Panc1 (cell line): ENCODE measurements at regions of chr7 and their contacts with region 1.

Region 1: GRCh38 chr7:322111-322671 is 32.2 kb downstream of the FOXL3 start:
- DNase-seq: no peak
- ATAC-seq: peak; percentile 95
- H3K4me3 ChIP-seq: peak overlapping the region in 1 of 2 experiments; percentile 33; a peak in 2 of 4 replicates
- H3K27ac ChIP-seq: no peak overlapping the region
- H3K4me1 ChIP-seq: peaks cover 7% of the 10 kb centered on the region
- H3K27me3 ChIP-seq: peaks cover 14% of the 10 kb centered on the region
- CTCF ChIP-seq: peak; percentile 98

Region 2: GRCh38 chr7:519484-520390 is 197.5 kb after region 1 on chr7 and contains the start of gene PDGFA:
- CTCF ChIA-PET with region 1: no interaction called
- POLR2A ChIA-PET with region 1: no interaction called
- in situ Hi-C with region 1: no loop called
- intact Hi-C with region 1: loop called (anchors 5 kb)
- DNase-seq: no peak
- ATAC-seq: peak; percentile 66
- H3K4me3 ChIP-seq: peak within 1 kb of the TSS; percentile 67 to 81
- H3K27ac ChIP-seq: peak within 1 kb of the TSS; percentile 66
- H3K4me1 ChIP-seq: peaks cover 18% of the 10 kb centered on the region
- H3K27me3 ChIP-seq: no peaks in the 10 kb centered on the region; the same call in 1 of the 2 replicates
- CTCF ChIP-seq: no peak
- total RNA-seq, gene PDGFA: 18.5 TPM

Region 3: GRCh38 chr7:774161-775109 is 452.2 kb after region 1 on chr7:
- CTCF ChIA-PET with region 1: no interaction called
- POLR2A ChIA-PET with region 1: no interaction called
- in situ Hi-C with region 1: no loop called
- intact Hi-C with region 1: loop called (anchors 10 kb)
- DNase-seq: no peak
- ATAC-seq: peak; percentile 84
- H3K4me3 ChIP-seq: no peak overlapping the region
- H3K27ac ChIP-seq: no peak overlapping the region
- H3K4me1 ChIP-seq: 0 out of 2 replicates have a peak, but pooled peaks cover 3% of the 10 kb centered on the region
- H3K27me3 ChIP-seq: no peaks in the 10 kb centered on the region
- CTCF ChIP-seq: peak; percentile 99